Tibial artery (tissue), 4 donors: ENCODE measurements at regions of chr6 and their contacts with region 1.

Region 1: GRCh38 chr6:56843573-56844349 is 111.1 kb upstream of the BEND6 start:
- DNase-seq: peak; percentile 76 to 89
- H3K4me3 ChIP-seq: peak overlapping the region; percentile 77 to 86
- H3K27ac ChIP-seq: peak overlapping the region; percentile 89 to 94
- H3K4me1 ChIP-seq: peaks cover 0 to 39% (median 4%) of the 10 kb centered on the region in 4 donors
- H3K27me3 ChIP-seq: no peaks in the 10 kb centered on the region
- CTCF ChIP-seq: peak; percentile 68 to 70

Region 2: DNA sequence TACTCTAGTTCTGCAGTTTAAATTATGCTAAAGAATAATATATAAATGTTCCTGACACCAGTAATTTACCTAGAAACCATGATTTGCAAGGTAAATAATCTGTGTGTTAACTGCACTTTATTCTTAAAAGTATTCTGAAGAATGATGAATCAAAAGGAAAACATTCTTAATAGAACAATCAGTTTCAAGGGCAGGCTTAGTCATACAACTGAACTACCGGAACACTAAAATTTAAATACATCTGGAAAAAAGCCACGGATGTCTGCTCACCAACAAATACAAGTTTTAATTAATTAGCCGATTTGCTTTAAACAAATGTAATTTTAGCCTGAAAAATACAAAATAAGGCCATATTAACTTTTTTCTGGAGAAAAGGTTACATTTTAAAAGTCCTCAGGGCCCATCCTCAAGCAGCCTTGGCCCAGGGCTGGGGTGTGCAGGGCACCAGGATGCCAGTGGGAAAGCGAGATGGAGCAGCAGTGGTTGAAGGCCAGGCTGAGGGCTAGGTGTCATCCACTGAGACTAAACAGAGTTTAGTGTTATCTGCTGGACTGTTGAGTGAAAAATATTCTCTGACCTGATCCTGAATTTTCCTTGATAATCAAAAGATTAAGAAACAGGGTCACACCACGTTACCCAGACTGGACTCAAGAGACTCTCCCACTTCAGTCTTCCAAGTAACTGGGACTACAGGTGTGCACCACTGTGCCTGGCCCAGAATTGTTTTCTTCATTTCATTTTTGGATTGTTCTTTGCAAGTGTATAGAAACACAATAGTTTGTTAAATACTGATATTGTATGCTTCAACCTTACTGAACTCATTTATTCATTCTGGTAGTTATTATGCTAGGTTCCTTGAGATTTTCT is 112.9 kb before region 1 on chr6:
- intact Hi-C with region 1: no loop called
- DNase-seq: no peak
- H3K4me3 ChIP-seq: no peak overlapping the region
- H3K27ac ChIP-seq: peak overlapping the region; percentile 17 to 34
- H3K4me1 ChIP-seq: peaks cover 0 to 71% (median 8%) of the 10 kb centered on the region in 4 donors
- H3K27me3 ChIP-seq: no peaks in the 10 kb centered on the region
- CTCF ChIP-seq: no peak

Region 3: DNA sequence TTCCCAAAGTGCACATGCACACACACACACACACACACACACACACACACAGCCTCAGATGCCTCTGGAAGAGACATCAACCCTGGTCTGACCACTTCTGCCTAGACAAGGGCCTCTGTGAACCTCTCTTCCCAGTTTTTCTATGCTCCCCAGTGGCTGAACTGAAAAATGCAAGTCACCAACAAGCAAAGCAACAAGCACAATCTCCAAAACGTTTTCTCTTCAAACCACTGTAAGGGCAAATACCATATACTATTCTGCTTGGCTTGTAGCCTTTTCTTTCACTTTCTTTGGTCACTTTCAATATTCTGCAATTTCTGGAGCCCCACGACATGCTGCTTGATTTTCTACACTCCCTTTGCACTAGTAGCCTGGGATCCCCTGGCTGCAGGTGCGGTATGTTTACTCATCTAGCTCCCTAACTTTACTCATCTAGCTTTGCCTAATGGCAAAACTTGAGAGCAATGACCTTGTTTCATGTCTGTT is 79.6 kb before region 1 on chr6:
- intact Hi-C with region 1: loop called (anchors 10 kb)
- DNase-seq: no peak
- H3K4me3 ChIP-seq: no peak overlapping the region
- H3K27ac ChIP-seq: no peak overlapping the region
- H3K4me1 ChIP-seq: peaks cover 0 to 57% (median 26%) of the 10 kb centered on the region in 4 donors
- H3K27me3 ChIP-seq: no peaks in the 10 kb centered on the region
- CTCF ChIP-seq: peak; percentile 30 to 35